CD4-positive, alpha-beta T cell (primary cell): ENCODE measurements at regions of chr2 and their contacts with region 1.

Region 1: GRCh38 chr2:60818272-60818671 is 62.2 kb downstream of the PAPOLG start:
- DNase-seq: peak in 5 of 14 experiments; percentile 16 to 65 (median 46)
- ATAC-seq: no peak
- H3K4me3 ChIP-seq: no peak overlapping the region
- H3K4me3 Mint-ChIP-seq: no peak overlapping the region
- H3K27ac ChIP-seq: no peak overlapping the region
- H3K27ac Mint-ChIP-seq: peak overlapping the region; percentile 86
- H3K4me1 ChIP-seq: peaks cover 40% of the 10 kb centered on the region
- H3K4me1 Mint-ChIP-seq: peaks cover 50% of the 10 kb centered on the region
- H3K27me3 ChIP-seq: no peaks in the 10 kb centered on the region
- H3K27me3 Mint-ChIP-seq: no peaks in the 10 kb centered on the region
- CTCF ChIP-seq: no peak

Region 2: DNA sequence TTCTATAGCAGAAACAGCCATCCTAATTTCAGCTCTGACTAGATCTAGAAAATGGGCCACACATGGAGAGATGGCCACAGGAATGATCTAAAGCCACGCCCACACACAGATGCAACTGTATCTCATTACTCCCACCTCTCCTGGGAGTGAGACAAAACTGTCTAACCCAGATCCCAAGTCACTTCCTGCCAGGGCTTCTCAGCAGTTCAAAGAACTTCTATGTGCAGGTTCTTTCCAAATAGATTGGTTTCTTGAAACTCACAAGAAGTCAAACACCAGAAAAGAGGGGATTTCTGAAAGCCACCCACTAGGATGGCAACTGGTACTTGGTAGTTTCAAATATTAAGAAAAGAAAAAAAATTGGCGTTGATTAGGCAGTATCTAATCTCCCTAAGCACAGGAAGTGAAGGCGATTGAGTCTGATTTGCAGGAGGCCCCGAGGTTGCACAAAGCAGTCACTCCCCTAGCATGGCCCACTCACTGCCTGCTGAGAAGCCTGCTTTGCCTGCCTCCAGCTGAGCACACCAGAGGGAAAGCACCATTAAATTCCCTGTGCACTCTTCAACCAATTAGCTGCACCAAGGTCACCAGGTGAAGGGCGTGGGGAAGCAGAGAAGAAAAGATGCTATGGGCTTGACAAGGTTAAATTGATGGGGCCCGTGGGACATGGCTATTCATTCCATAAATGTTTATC is 11.1 kb before region 1 on chr2:
- CTCF ChIA-PET with region 1: interaction called, 7 read pairs
- POLR2A ChIA-PET with region 1: interaction called, 6 read pairs
- intact Hi-C with region 1: loop called in 1 of 2 experiments (anchors 2 kb)
- DNase-seq: peak in 6 of 14 experiments; percentile 4 to 73 (median 44)
- ATAC-seq: peak; percentile 77
- H3K4me3 ChIP-seq: no peak overlapping the region
- H3K4me3 Mint-ChIP-seq: peak overlapping the region; percentile 49
- H3K27ac ChIP-seq: peak overlapping the region in 1 of 2 donors; percentile 58
- H3K27ac Mint-ChIP-seq: peak overlapping the region; percentile 79
- H3K4me1 ChIP-seq: peaks cover 45% of the 10 kb centered on the region
- H3K4me1 Mint-ChIP-seq: peaks cover 51% of the 10 kb centered on the region
- H3K27me3 ChIP-seq: no peaks in the 10 kb centered on the region
- H3K27me3 Mint-ChIP-seq: no peaks in the 10 kb centered on the region
- CTCF ChIP-seq: no peak